AG04449 (cell line): ENCODE measurements at regions of chr5 and their contacts with region 1.

Region 1: GRCh38 chr5:40688127-40688761 is 8.5 kb downstream of the PTGER4 start:
- DNase-seq: no peak
- H3K4me3 ChIP-seq: no peak overlapping the region
- CTCF ChIP-seq: peak; percentile 72

Region 2: DNA sequence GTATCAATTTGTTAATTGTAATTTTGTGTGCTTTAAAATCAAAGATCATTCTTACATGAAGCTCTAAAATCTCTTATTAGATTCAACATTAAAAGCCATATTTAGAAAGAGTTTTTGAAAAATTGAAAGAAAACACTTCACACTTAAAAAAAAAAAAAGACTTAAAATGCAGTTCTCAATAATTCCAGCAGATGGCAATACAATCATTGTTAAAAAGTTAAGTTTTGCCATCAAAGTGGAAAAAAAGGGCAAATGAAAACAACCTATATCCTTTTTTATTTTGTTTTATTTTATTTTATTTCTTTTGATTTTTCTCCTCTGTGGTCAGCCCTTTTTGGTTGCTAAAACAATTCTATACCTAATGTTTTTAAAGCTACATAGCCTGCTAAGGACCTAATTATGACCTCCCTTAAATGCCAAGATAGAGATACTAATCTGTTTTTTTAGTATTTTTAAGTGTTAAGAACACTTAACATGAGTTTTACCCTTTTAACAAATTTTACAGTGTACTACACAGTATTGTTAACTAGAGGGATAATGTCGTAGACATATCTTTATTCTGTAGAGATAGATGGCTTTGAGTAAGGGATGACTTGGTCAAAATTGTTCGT is 1109.3 kb before region 1 on chr5:
- CTCF ChIA-PET with region 1: interaction called, 11 read pairs
- POLR2A ChIA-PET with region 1: no interaction called
- DNase-seq: no peak
- H3K4me3 ChIP-seq: no peak overlapping the region
- CTCF ChIP-seq: no peak